Heart left ventricle (tissue), 16 donors: ENCODE measurements at regions of chr1 and their contacts with region 1.

Region 1: GRCh38 chr1:214328770-214329469 is 48.0 kb downstream of the SMYD2 start:
- DNase-seq: peak; percentile 77 to 83 (median 82)
- ATAC-seq: peak; percentile 74 to 89 (median 86)
- H3K4me3 ChIP-seq: no peak overlapping the region
- H3K27ac ChIP-seq: peak overlapping the region in 8 of 12 donors; percentile 36 to 78 (median 65)
- H3K4me1 ChIP-seq: peaks cover 0 to 50% (median 15%) of the 10 kb centered on the region in 12 donors
- H3K27me3 ChIP-seq: no peaks in the 10 kb centered on the region
- CTCF ChIP-seq: peak; percentile 86 to 94 (median 90)
- POLR2A ChIP-seq: no peak

Region 2: GRCh38 chr1:213122514-213122929 is 1206.4 kb before region 1 on chr1:
- intact Hi-C with region 1: loop called in 1 of 10 experiments (anchors 5 kb)
- DNase-seq: no peak
- ATAC-seq: no peak
- H3K4me3 ChIP-seq: no peak overlapping the region
- H3K27ac ChIP-seq: no peak overlapping the region
- H3K4me1 ChIP-seq: peaks cover 0 to 6% (median 0%) of the 10 kb centered on the region in 12 donors
- H3K27me3 ChIP-seq: no peaks in the 10 kb centered on the region
- CTCF ChIP-seq: peak; percentile 46 to 73 (median 65)
- POLR2A ChIP-seq: no peak

Region 3: GRCh38 chr1:214261206-214262123 is 67.5 kb before region 1 on chr1:
- intact Hi-C with region 1: loop called (anchors 1 to 2 kb)
- DNase-seq: peak; percentile 85 to 91 (median 89)
- ATAC-seq: peak; percentile 95 to 98 (median 97)
- H3K4me3 ChIP-seq: no peak overlapping the region
- H3K27ac ChIP-seq: peak overlapping the region in 10 of 12 donors; percentile 40 to 86 (median 68)
- H3K4me1 ChIP-seq: peaks cover 0 to 20% (median 5%) of the 10 kb centered on the region in 12 donors
- H3K27me3 ChIP-seq: peaks cover 0 to 56% (median 6%) of the 10 kb centered on the region in 9 donors
- CTCF ChIP-seq: peak; percentile 93 to 99 (median 97)
- POLR2A ChIP-seq: no peak

Region 4: DNA sequence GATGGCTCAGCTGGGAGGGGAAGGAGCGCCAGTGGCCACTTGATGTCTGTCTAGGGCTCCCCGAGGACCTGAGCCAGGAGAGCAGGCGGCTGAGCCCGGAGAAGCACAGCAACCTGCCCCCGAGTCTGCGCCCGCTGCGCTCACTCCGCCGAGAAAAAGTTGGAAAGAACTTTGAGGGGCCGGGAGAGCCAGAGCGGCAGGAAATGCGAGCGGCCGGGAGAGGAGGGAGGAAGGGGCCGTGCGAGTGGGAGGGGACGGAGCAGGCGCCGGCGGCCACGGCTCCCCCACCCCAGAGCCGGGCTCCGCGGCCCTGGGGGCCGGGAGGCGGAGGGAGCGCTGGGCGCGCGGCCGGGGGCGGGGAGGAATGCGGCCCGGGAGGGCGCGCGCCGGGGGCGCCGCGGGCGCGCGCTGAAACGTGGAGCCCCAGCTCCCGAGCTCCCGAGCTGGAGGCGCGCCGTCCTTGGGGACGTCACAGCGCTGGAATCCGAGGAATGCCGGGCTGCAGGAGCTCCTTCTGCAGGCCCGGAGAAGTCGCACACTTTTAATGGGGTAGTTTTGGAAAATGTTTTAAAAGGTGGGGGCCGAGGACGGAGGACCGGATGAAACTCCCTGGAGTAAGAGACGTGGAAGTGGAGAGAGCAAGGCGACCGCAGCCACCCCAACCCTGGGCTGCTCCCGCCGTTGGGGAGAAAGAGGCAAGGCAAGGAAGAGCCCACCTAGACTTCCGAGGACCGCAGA is 222.7 kb after region 1 on chr1 and contains the start of gene PTPN14:
- intact Hi-C with region 1: loop called in 3 of 10 experiments (anchors 10 kb)
- DNase-seq: peak; percentile 90 to 93 (median 91)
- ATAC-seq: peak; percentile 78 to 91 (median 88)
- H3K4me3 ChIP-seq: peak within 1 kb of the TSS; percentile 74 to 94 (median 89)
- H3K27ac ChIP-seq: peak within 1 kb of the TSS; percentile 82 to 99 (median 98)
- H3K4me1 ChIP-seq: peaks cover 0 to 47% (median 35%) of the 10 kb centered on the region in 12 donors
- H3K27me3 ChIP-seq: peaks cover 0 to 20% (median 0%) of the 10 kb centered on the region in 9 donors
- CTCF ChIP-seq: peak in 7 of 12 donors; percentile 13 to 68 (median 48)
- POLR2A ChIP-seq: peak; percentile 13 to 60
- total RNA-seq, gene PTPN14: 25.3 to 52.0 (median 45.9) TPM

Region 5: GRCh38 chr1:214632091-214632490 is 303.2 kb after region 1 on chr1:
- intact Hi-C with region 1: loop called in 1 of 10 experiments (anchors 2 kb)
- DNase-seq: no peak
- ATAC-seq: no peak
- H3K4me3 ChIP-seq: no peak overlapping the region
- H3K27ac ChIP-seq: no peak overlapping the region
- H3K4me1 ChIP-seq: peaks cover 0 to 5% (median 0%) of the 10 kb centered on the region in 12 donors
- H3K27me3 ChIP-seq: no peaks in the 10 kb centered on the region
- CTCF ChIP-seq: no peak
- POLR2A ChIP-seq: no peak